CD4-positive, alpha-beta T cell (primary cell): ENCODE measurements at regions of chr15 and their contacts with region 1.

Region 1: DNA sequence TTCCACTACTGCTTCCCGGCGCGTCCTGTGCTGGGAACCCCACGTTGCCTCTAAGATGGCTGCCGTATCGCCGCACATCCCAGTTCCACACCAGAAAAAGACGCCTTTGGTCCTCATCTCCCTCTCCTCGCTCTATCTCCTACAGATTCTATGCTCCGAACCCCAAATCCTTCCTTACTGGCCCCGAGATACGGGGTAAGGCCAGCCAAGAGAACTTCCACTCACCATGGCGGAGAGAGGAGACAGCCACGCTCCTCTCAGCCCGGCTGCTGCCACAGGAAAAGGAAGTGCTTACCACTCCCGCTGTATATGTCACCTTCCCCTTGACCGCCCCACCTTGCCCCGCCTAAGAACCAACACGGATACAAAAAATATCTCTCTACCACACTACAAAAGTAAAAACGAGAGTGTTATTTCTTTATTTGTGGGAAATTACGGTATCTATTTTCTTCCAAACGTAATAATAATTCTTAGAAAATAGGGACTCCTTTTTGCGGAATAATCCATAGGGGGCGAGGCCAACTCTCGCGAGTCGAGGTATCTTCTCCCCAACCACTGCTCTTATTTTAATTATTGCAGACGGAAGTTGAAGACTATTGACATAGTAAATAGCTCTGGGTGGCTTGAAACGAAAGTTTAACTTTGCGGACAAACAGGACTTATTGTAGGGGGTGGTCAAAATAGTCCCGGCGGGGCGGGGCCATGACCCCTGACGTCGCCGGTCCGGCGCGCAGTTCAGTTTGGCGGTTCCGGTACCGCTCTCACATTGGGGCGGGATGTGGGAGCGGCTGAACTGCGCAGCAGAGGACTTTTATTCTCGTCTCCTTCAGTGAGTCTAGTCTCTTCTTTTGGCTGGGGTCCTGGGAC is at the starts of genes RPL4 and ZWILCH:
- DNase-seq: peak; percentile 69 to 91 (median 77)
- ATAC-seq: peak; percentile 85
- H3K4me3 ChIP-seq: peak within 1 kb of the TSS; percentile 95
- H3K4me3 Mint-ChIP-seq: peak within 1 kb of the TSS; percentile 100
- H3K27ac ChIP-seq: peak within 1 kb of the TSS; percentile 85 to 95
- H3K27ac Mint-ChIP-seq: peak within 1 kb of the TSS; percentile 93
- H3K4me1 ChIP-seq: peaks cover 24% of the 10 kb centered on the region
- H3K4me1 Mint-ChIP-seq: peaks cover 51% of the 10 kb centered on the region
- H3K27me3 ChIP-seq: no peaks in the 10 kb centered on the region
- H3K27me3 Mint-ChIP-seq: no peaks in the 10 kb centered on the region
- CTCF ChIP-seq: no peak
- total RNA-seq, gene RPL4: 4,558 to 4,627 TPM
- total RNA-seq, gene ZWILCH: 6.8 to 7.2 TPM

Region 2: GRCh38 chr15:65318870-65319356 is 1185.9 kb before region 1 on chr15:
- CTCF ChIA-PET with region 1: no interaction called
- POLR2A ChIA-PET with region 1: no interaction called
- intact Hi-C with region 1: loop called in 1 of 2 experiments (anchors 10 kb)
- DNase-seq: peak; percentile 56 to 87 (median 69)
- ATAC-seq: peak; percentile 100
- H3K4me3 ChIP-seq: no peak overlapping the region
- H3K4me3 Mint-ChIP-seq: no peak overlapping the region
- H3K27ac ChIP-seq: no peak overlapping the region
- H3K27ac Mint-ChIP-seq: no peak overlapping the region
- H3K4me1 ChIP-seq: peaks cover 2% of the 10 kb centered on the region
- H3K4me1 Mint-ChIP-seq: no peaks in the 10 kb centered on the region
- H3K27me3 ChIP-seq: peaks cover 0 to 8% of the 10 kb centered on the region in 2 experiments
- H3K27me3 Mint-ChIP-seq: peaks cover 4% of the 10 kb centered on the region
- CTCF ChIP-seq: peak; percentile 92

Region 3: GRCh38 chr15:66293419-66294156 is 211.2 kb before region 1 on chr15 and contains the start of gene DIS3L:
- CTCF ChIA-PET with region 1: no interaction called
- POLR2A ChIA-PET with region 1: interaction called, 10 read pairs
- intact Hi-C with region 1: no loop called
- DNase-seq: peak; percentile 36 to 86 (median 58)
- ATAC-seq: peak; percentile 72
- H3K4me3 ChIP-seq: peak within 1 kb of the TSS; percentile 75
- H3K4me3 Mint-ChIP-seq: peak within 1 kb of the TSS; percentile 92
- H3K27ac ChIP-seq: peak within 1 kb of the TSS; percentile 80 to 93
- H3K27ac Mint-ChIP-seq: peak within 1 kb of the TSS; percentile 97
- H3K4me1 ChIP-seq: peaks cover 33% of the 10 kb centered on the region
- H3K4me1 Mint-ChIP-seq: peaks cover 49% of the 10 kb centered on the region
- H3K27me3 ChIP-seq: no peaks in the 10 kb centered on the region
- H3K27me3 Mint-ChIP-seq: no peaks in the 10 kb centered on the region
- CTCF ChIP-seq: no peak
- total RNA-seq, gene DIS3L: 22.6 to 24.3 TPM

Region 4: DNA sequence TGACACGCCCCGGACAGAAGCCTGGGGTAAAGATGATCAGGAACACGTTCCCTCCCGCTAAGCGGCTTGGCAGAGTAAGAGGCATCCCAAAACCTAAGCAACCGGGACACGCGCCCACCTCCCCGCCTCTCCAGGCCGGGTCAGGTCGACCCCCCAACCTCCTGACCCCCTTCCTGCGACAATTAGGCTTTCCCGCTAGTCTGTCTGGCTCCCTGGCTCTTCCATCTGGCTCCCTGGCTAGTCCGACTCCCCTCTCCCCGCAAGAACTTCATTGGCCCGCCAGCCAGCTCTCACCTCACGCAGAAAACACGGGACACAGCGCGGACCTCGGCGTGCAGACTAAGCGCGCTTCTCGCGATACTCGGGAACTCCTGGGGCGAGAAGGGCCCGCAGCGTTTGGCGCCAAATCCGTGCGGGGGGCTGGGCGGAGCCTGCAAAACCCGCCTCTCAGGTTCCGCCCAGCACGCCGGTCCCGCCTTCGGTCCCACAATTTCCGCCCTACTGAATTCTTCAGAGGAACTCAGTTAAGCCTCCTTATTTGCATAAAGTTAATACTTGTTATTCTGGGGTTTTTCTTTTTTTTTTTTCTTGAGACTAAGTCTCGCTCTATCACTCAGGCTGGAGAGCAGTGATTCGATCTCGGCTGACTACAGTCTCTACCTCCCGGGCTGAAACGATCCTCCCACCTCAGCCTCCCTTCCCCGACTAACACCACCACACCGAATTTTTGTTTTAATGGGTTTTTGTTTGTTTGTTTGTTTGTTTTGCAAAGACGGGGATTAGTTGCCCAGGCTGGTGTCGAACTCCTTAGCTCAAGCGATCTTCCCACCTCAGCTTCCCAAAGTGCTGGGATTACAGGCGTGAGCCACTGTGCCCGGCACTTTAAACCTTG is 148.2 kb before region 1 on chr15 and contains the start of gene TIPIN:
- CTCF ChIA-PET with region 1: no interaction called
- POLR2A ChIA-PET with region 1: interaction called, 4 read pairs
- intact Hi-C with region 1: loop called in 1 of 2 experiments (anchors 1 kb)
- DNase-seq: peak; percentile 94 to 99 (median 96)
- ATAC-seq: peak; percentile 96
- H3K4me3 ChIP-seq: peak within 1 kb of the TSS; percentile 74
- H3K4me3 Mint-ChIP-seq: peak within 1 kb of the TSS; percentile 89
- H3K27ac ChIP-seq: peak within 1 kb of the TSS; percentile 24 to 56
- H3K27ac Mint-ChIP-seq: peak within 1 kb of the TSS; percentile 81
- H3K4me1 ChIP-seq: peaks cover 20% of the 10 kb centered on the region
- H3K4me1 Mint-ChIP-seq: peaks cover 23% of the 10 kb centered on the region
- H3K27me3 ChIP-seq: no peaks in the 10 kb centered on the region
- H3K27me3 Mint-ChIP-seq: no peaks in the 10 kb centered on the region
- CTCF ChIP-seq: no peak
- total RNA-seq, gene TIPIN: 3.7 to 3.9 TPM

Region 5: GRCh38 chr15:66472176-66472999 is 32.4 kb before region 1 on chr15:
- CTCF ChIA-PET with region 1: no interaction called
- POLR2A ChIA-PET with region 1: interaction called, 7 read pairs
- intact Hi-C with region 1: loop called in 1 of 2 experiments (anchors 2 kb)
- DNase-seq: peak; percentile 7 to 83 (median 31)
- ATAC-seq: peak; percentile 94
- H3K4me3 ChIP-seq: peak overlapping the region; percentile 33
- H3K4me3 Mint-ChIP-seq: peak overlapping the region; percentile 69
- H3K27ac ChIP-seq: peak overlapping the region; percentile 25 to 48
- H3K27ac Mint-ChIP-seq: peak overlapping the region; percentile 88
- H3K4me1 ChIP-seq: peaks cover 23% of the 10 kb centered on the region
- H3K4me1 Mint-ChIP-seq: peaks cover 58% of the 10 kb centered on the region
- H3K27me3 ChIP-seq: no peaks in the 10 kb centered on the region
- H3K27me3 Mint-ChIP-seq: no peaks in the 10 kb centered on the region
- CTCF ChIP-seq: no peak

Region 6: DNA sequence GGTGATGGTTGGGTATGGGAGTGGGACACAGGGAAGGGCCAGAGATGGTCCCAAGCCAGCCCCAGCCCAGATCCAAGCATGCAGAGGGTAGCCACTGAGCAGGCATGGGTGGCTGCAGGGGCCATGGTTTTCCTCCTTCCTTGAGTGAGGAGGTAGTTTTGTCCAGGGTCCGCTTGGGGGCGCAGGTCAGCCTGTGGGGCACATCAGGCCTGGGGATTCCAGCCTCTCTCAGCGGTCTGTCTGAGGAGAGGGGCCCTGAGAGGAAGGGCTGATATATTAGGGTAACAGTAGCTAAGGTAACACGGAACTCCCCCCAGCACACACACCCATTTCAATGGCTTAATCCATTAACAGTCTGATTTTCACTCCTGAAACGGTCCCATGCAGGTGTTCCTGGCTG is 83.7 kb after region 1 on chr15:
- CTCF ChIA-PET with region 1: no interaction called
- POLR2A ChIA-PET with region 1: no interaction called
- intact Hi-C with region 1: no loop called
- DNase-seq: no peak
- ATAC-seq: no peak
- H3K4me3 ChIP-seq: no peak overlapping the region
- H3K4me3 Mint-ChIP-seq: no peak overlapping the region
- H3K27ac ChIP-seq: no peak overlapping the region
- H3K27ac Mint-ChIP-seq: no peak overlapping the region
- H3K4me1 ChIP-seq: no peaks in the 10 kb centered on the region
- H3K4me1 Mint-ChIP-seq: no peaks in the 10 kb centered on the region
- H3K27me3 ChIP-seq: peaks cover 7 to 8% of the 10 kb centered on the region in 2 experiments
- H3K27me3 Mint-ChIP-seq: peaks cover 28% of the 10 kb centered on the region
- CTCF ChIP-seq: no peak

Region 7: DNA sequence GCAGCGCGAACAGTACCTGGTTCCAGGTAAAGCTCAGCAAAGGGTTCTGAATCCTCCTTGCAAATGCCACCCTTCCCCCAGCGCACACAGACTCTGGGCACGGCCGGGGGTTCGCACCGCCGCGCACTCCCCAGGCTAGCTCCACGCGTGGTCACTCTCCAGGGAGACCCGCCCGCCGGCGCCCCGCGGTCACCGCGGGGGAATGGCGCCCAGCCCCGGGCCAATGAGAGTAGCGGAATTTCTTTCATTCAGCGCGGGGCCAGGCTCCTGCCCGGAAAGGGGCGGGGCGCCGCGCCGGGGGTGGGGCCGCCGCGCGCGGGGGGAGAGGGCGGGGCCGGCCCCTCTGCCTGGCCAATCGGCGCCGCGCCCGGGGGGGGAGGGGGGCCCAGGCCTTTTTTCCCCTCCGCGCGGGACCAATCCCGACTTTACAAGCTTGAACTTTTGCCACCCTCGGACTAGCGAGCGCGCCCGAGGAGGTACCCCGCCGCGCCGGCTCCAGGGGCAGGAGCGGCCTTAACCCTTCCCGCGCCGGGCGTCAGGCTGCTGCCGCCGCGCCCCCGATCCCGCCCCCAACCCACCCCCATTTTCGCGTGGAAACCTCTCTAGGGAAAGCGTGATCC is 196.1 kb after region 1 on chr15:
- CTCF ChIA-PET with region 1: no interaction called
- POLR2A ChIA-PET with region 1: no interaction called
- intact Hi-C with region 1: loop called in 1 of 2 experiments (anchors 10 kb)
- DNase-seq: peak; percentile 64 to 91 (median 82)
- ATAC-seq: peak; percentile 76
- H3K4me3 ChIP-seq: peak overlapping the region; percentile 76
- H3K4me3 Mint-ChIP-seq: peak overlapping the region; percentile 90
- H3K27ac ChIP-seq: no peak overlapping the region
- H3K27ac Mint-ChIP-seq: peak overlapping the region; percentile 73
- H3K4me1 ChIP-seq: peaks cover 30% of the 10 kb centered on the region
- H3K4me1 Mint-ChIP-seq: peaks cover 23% of the 10 kb centered on the region
- H3K27me3 ChIP-seq: peaks cover 17 to 20% of the 10 kb centered on the region in 2 experiments
- H3K27me3 Mint-ChIP-seq: peaks cover 30% of the 10 kb centered on the region
- CTCF ChIP-seq: no peak

Region 8: DNA sequence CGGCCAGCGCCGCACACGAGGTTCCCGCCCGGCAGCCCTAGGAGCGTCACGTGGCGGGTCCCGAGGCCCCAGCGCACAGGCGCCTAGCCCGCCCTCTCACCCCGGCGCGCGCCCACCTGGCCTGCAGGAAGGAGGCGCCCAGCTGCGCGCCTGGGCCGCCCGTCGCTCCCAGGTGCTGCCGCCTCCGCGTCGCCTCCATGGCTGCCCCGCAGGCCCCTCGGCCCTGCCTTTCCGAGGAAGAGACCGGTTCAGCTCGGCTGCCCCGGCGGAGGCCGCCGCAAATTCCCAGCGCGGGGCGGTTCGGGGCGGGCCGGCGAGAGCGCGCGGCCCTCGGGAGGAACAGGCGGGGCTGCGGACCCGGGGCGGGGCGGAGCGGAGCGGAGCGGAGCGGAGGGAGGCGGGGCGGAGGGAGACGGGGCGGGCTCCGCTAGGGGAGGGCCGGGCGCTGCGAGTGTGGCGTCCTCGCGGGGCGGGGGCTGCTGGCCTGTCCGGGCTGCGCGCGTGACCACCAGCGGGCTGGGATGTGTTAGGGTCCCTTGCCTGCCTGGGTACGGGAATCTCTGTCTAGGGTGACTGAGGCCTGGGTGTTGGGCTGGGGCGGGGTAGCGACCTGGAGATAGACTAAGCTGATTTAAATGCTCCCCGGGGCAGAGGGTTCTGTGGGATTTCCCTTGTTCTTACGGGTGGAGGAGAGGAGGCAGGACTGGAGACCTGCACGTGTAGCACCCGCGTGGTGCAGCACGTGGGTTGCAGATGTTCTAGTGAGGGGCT is 1724.8 kb after region 1 on chr15 and contains the start of gene CLN6:
- CTCF ChIA-PET with region 1: no interaction called
- POLR2A ChIA-PET with region 1: no interaction called
- intact Hi-C with region 1: loop called in 1 of 2 experiments (anchors 5 kb)
- DNase-seq: peak; percentile 57 to 93 (median 75)
- ATAC-seq: peak; percentile 82
- H3K4me3 ChIP-seq: peak within 1 kb of the TSS; percentile 88
- H3K4me3 Mint-ChIP-seq: peak within 1 kb of the TSS; percentile 92
- H3K27ac ChIP-seq: peak within 1 kb of the TSS in 1 of 2 donors; percentile 34
- H3K27ac Mint-ChIP-seq: peak within 1 kb of the TSS; percentile 73
- H3K4me1 ChIP-seq: peaks cover 29% of the 10 kb centered on the region
- H3K4me1 Mint-ChIP-seq: peaks cover 28% of the 10 kb centered on the region
- H3K27me3 ChIP-seq: no peaks in the 10 kb centered on the region
- H3K27me3 Mint-ChIP-seq: no peaks in the 10 kb centered on the region
- CTCF ChIP-seq: no peak
- total RNA-seq, gene CLN6: 8.0 to 8.1 TPM